ENCODE measurements at regions of chr2 and their contacts with region 1.

Region 1: GRCh38 chr2:171893824-171894611 is at the start of gene SLC25A12:
- DNase-seq: peak; percentile 78 to 92
- H3K4me3 ChIP-seq: peak within 1 kb of the TSS; percentile 88
- H3K27ac ChIP-seq: peak within 1 kb of the TSS; percentile 16; the same call in 1 of the 2 replicates
- H3K4me1 ChIP-seq: peaks cover 22% of the 10 kb centered on the region
- H3K27me3 ChIP-seq: no peaks in the 10 kb centered on the region
- CTCF ChIP-seq: no peak
- total RNA-seq, gene SLC25A12: 25.9 and 28.8 TPM in 2 replicates

Region 2: DNA sequence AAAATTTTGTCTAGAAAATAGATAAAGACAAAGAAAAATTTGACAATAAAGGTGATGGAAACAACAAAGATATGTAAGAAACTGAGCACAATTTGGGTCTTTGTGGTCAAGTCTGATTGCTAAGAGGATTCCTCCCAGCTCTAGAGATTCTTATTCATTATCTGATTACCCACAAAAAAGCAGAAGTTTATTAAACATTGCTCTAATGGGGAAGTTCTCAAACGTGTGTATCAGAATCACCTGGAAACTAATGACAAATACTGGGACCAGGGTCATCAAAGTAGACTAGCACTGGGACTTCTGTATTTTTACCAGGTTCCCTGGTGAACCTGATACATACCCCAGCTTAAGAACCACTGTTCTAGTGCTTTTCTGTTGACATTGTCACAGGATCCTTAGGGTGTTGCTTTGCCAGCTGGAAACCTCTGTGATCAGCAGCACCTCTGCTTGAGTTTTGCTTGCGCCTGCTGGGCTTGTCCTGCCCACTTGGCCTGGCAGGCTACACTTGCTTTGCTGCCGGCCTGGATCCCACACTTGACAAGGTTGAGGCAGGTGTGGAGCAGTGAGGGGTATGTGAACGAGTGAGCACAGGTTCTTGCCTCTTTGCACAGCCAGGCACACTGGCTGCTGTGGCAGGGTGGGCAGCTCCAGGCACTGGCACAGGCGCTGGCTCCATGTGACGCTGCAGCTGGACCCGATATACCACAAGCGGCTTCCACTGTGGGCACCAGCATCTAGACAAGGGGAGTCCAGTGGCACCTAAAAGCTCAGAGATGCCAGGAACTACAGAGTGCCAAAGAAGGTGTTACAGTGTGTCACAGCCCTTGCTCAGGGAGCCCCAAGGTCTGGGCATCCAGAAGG is 971.2 kb before region 1 on chr2:
- CTCF ChIA-PET with region 1: no interaction called
- POLR2A ChIA-PET with region 1: interaction called, 14 read pairs
- intact Hi-C with region 1: no loop called
- DNase-seq: no peak
- H3K4me3 ChIP-seq: no peak overlapping the region
- H3K27ac ChIP-seq: no peak overlapping the region
- H3K4me1 ChIP-seq: peaks cover 6% of the 10 kb centered on the region; the same call in 1 of the 2 replicates
- H3K27me3 ChIP-seq: no peaks in the 10 kb centered on the region
- CTCF ChIP-seq: no peak

Region 3: GRCh38 chr2:171908235-171908634 is 14.2 kb after region 1 on chr2:
- CTCF ChIA-PET with region 1: interaction called, 11 read pairs
- POLR2A ChIA-PET with region 1: no interaction called
- intact Hi-C with region 1: no loop called
- DNase-seq: no peak
- H3K4me3 ChIP-seq: no peak overlapping the region
- H3K27ac ChIP-seq: no peak overlapping the region
- H3K4me1 ChIP-seq: no peaks in the 10 kb centered on the region
- H3K27me3 ChIP-seq: no peaks in the 10 kb centered on the region
- CTCF ChIP-seq: no peak

Region 4: GRCh38 chr2:171922230-171923022 is 28.4 kb after region 1 on chr2 and contains the start of gene HAT1:
- CTCF ChIA-PET with region 1: no interaction called
- POLR2A ChIA-PET with region 1: no interaction called
- intact Hi-C with region 1: loop called (anchors 1 kb)
- DNase-seq: peak; percentile 98 to 100
- H3K4me3 ChIP-seq: peak within 1 kb of the TSS; percentile 68
- H3K27ac ChIP-seq: peak within 1 kb of the TSS; percentile 52
- H3K4me1 ChIP-seq: peaks cover 25% of the 10 kb centered on the region
- H3K27me3 ChIP-seq: no peaks in the 10 kb centered on the region
- CTCF ChIP-seq: no peak
- total RNA-seq, gene HAT1: 96.4 and 132 TPM in 2 replicates

Region 5: DNA sequence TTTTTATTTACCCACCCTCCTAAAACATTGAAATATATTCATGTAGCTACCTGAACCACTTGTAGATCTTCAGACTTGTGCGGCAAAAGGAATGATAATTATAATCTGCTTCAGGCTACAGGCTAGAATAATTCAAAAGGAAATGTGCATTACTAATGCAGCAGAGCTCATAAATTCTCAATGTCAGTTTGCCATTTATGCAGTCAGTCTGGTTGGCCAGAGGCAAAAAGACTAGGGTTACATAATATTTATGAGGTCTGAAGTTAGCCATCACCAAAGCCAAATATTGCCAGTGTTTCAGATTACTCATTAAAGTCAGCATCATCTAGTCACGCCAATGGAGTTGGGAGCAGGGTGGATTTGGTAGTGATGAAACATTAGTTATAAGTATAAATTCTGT is 144.6 kb after region 1 on chr2:
- CTCF ChIA-PET with region 1: no interaction called
- POLR2A ChIA-PET with region 1: interaction called, 10 read pairs
- intact Hi-C with region 1: no loop called
- DNase-seq: peak in 1 of 2 experiments; percentile 96
- H3K4me3 ChIP-seq: no peak overlapping the region
- H3K27ac ChIP-seq: peak overlapping the region; percentile 33; the same call in 1 of the 2 replicates
- H3K4me1 ChIP-seq: peaks cover 20% of the 10 kb centered on the region
- H3K27me3 ChIP-seq: no peaks in the 10 kb centered on the region
- CTCF ChIP-seq: no peak